Thyroid gland (tissue), 4 donors: ENCODE measurements at regions of chr11 and their contacts with region 1.

Region 1: DNA sequence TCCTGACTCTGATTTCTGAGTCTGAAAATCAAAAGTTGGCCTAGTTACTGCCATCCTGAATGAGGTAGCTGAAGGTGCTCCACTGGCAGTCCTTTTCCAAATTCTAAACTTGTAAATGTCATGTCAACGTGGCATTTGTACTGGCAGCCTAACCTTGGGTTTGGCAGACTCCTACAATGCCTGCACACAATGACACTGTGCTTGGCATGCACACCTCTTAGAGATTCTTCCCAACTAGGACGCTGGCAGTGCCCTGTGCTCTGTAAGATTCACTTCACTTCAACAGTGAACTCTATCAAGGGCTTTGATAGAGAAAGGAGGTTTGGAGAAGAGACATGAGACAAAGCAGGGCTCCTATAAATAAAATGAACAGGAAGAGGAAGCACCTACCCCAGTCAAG is 21.9 kb upstream of the PPP2R1B start:
- DNase-seq: no peak
- H3K4me3 ChIP-seq: no peak overlapping the region
- H3K27ac ChIP-seq: no peak overlapping the region
- H3K4me1 ChIP-seq: peaks cover 0 to 3% of the 10 kb centered on the region in 2 donors
- H3K27me3 ChIP-seq: no peaks in the 10 kb centered on the region
- CTCF ChIP-seq: no peak
- POLR2A ChIP-seq: no peak

Region 2: DNA sequence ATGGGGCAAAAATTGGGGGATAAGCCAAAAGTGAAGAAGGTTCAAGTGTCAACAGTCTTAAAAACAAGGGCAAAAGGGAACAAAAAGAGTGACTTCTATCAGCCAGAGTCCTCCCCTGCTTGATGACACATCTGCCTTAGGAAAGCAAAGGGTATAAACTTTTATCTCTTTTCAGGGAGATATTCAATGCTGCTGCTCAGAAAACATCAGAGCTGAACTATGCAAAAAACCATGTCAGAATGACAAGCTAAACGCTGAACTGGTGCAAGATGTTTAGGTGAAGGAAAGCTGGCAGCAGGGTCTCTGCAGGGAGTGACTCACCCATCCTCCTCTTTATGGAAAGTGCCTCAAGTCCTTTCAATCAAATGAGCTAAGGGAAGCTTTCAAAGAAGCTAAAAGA is 58.6 kb after region 1 on chr11:
- intact Hi-C with region 1: loop called (anchors 5 kb)
- DNase-seq: no peak
- H3K4me3 ChIP-seq: no peak overlapping the region
- H3K27ac ChIP-seq: no peak overlapping the region
- H3K4me1 ChIP-seq: no peaks in the 10 kb centered on the region
- H3K27me3 ChIP-seq: no peaks in the 10 kb centered on the region
- CTCF ChIP-seq: no peak
- POLR2A ChIP-seq: no peak